OCI-LY7 (cell line): ENCODE measurements at regions of chr12 and their contacts with region 1.

Region 1: GRCh38 chr12:120292661-120293531 is at the start of gene RNU4-1:
- DNase-seq: peak; percentile 97
- H3K4me3 ChIP-seq: peak within 1 kb of the TSS; percentile 68
- H3K27ac ChIP-seq: peak within 1 kb of the TSS; percentile 89
- H3K4me1 ChIP-seq: peaks cover 32% of the 10 kb centered on the region
- CTCF ChIP-seq: no peak
- total RNA-seq, gene RNU4-1: under 0.01 TPM in 1 of 2 replicates, not detected in the other

Region 2: GRCh38 chr12:120032242-120032641 is 260.7 kb before region 1 on chr12:
- CTCF ChIA-PET with region 1: no interaction called
- POLR2A ChIA-PET with region 1: no interaction called
- intact Hi-C with region 1: no loop called
- DNase-seq: no peak
- H3K4me3 ChIP-seq: no peak overlapping the region
- H3K27ac ChIP-seq: no peak overlapping the region
- H3K4me1 ChIP-seq: no peaks in the 10 kb centered on the region
- CTCF ChIP-seq: no peak

Region 3: GRCh38 chr12:120200364-120200800 is 92.5 kb before region 1 on chr12:
- CTCF ChIA-PET with region 1: no interaction called
- POLR2A ChIA-PET with region 1: interaction called, 21 read pairs
- intact Hi-C with region 1: no loop called
- DNase-seq: peak; percentile 22
- H3K4me3 ChIP-seq: peak overlapping the region; percentile 90
- H3K27ac ChIP-seq: peak overlapping the region; percentile 87
- H3K4me1 ChIP-seq: peaks cover 48% of the 10 kb centered on the region
- CTCF ChIP-seq: no peak

Region 4: DNA sequence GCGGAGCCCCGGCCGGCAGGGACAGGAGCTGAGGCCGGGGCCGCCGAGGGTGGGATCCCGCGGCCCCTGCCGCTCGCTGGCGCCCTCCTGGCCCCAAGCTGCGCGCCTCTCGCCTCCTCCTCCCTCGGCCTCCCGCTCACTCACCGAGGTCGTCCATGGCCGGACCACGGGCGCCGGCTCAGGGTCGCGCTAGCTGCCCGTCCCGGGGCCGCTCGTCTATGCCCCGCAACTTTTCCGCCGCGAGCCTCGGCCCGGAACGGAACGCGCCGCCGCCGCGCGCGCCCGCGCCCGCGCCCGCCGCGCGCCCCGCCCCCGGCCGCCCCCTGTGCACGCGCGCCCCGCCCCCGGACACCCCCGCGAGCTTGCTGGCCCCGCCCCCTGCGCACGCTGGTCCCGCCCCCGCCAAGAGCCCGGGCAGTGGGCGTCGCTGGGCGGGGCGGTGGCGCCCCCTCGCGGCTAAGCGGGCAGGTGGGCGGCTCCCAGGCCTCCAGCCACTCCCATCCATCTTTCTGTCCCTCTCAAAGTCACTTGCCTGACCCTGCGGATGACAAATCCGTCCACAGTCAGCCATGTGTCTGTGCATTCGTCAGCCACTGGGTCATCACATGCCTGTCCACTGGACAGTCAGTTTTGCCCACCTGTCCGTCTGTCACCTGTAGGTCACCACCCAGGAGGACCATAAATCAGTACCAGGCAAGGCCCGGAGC is 27.3 kb before region 1 on chr12 and contains the start of gene PXN:
- CTCF ChIA-PET with region 1: interaction called, 4 read pairs
- POLR2A ChIA-PET with region 1: interaction called, 18 read pairs
- intact Hi-C with region 1: no loop called
- DNase-seq: peak; percentile 86
- H3K4me3 ChIP-seq: peak within 1 kb of the TSS; percentile 76
- H3K27ac ChIP-seq: no peak within 1 kb of the TSS
- H3K4me1 ChIP-seq: peaks cover 6% of the 10 kb centered on the region
- CTCF ChIP-seq: peak; percentile 82
- total RNA-seq, gene PXN: 5.5 and 8.6 TPM in 2 replicates

Region 5: DNA sequence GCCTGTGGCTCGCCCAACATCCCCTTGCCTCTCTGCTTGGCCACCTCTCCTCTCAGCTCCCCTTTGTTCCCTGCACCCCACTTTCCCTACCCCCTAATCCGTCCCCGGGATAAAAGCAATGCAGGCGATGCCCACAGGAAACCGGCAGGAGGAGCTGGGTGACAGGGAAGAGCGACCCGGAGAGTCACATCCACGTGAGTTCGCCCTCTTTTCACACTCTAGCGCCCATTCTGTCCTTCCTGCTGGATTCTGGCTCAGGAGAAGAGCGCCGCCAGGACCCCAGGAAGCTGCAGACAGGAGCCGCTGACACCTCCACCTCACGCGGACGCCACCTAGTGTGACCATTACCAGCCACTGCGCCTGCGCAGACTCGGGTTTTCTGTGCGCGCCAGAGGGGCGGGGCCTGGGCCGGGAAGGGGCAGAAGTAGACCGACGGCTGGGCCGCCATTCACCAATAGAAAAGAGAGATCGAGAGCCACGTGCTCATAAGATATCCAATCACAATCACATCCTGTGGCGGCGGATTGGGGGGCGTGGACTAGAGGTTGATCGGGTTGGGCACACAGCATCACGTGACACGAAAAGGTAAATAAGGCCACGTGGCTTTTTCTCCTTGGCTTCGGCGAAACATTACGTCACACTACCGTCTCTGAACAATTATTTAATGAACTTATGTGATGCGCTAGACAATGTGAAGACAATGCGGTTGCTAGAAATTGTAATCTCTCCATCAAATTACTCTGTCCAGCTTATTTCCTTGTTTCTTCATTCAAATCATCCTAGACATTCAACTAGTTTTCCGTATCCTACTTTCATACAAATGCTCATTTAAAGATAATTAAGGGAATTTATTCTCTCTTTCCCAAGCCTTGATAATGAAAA is 24.6 kb after region 1 on chr12:
- CTCF ChIA-PET with region 1: no interaction called
- POLR2A ChIA-PET with region 1: interaction called, 10 read pairs
- intact Hi-C with region 1: no loop called
- DNase-seq: peak; percentile 100
- H3K4me3 ChIP-seq: peak overlapping the region; percentile 69
- H3K27ac ChIP-seq: no peak overlapping the region
- H3K4me1 ChIP-seq: peaks cover 10% of the 10 kb centered on the region
- CTCF ChIP-seq: peak; percentile 79

Region 6: DNA sequence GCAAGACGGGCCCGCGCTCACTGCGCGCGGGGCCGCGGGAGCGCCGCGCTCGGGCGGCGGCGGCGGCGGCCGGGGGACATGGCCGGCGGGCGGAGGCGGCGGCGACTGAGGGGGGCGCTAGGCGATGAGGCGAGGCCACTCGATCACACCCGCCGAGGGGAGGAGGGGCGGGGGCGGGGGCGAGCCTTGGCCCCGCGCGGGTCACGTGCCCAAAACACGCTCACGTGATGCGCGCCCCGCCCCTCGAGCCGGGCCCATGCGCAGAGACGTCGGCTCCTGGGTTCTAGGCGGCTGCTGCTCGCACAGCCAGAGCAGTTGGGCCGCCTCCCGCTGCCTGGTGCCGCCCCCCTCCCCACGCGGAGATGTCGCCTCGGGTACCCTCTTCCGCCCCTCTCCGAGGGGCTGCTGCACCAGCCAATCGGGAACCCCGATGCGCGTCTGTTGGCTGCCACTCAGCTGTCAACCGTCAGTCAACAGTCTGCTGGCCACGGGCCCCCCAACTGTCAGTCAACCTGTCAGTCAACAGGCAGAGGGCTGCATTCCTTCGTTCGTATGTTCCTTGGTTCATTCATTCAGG is 611.4 kb after region 1 on chr12 and contains the start of gene SPPL3:
- CTCF ChIA-PET with region 1: no interaction called
- POLR2A ChIA-PET with region 1: no interaction called
- intact Hi-C with region 1: no loop called
- DNase-seq: peak; percentile 95
- H3K4me3 ChIP-seq: peak within 1 kb of the TSS; percentile 86
- H3K27ac ChIP-seq: peak within 1 kb of the TSS; percentile 63
- H3K4me1 ChIP-seq: peaks cover 27% of the 10 kb centered on the region
- CTCF ChIP-seq: no peak
- total RNA-seq, gene SPPL3: 5.5 and 8.6 TPM in 2 replicates